ENCODE measurements at regions of chr12 and their contacts with region 1.

Region 1: DNA sequence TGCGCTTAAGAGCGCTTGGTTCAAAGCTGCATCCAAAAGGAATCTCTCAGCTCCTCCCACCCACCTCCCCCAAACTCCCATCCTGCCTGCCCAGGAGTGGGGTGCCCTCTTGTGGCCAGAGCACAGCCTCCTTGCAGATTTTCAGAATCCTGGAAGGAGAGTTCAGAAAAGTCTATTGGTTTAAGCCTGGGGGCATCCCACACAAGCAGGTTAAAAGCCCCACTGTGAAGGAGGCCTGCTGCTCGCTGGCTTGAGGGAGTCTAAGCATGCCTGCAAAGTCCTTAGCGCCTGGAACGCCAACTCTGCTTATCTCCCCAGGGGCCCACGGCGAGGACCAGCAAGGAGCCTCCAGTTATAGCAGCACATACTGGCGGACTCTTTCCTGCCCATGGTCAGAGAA is 297.1 kb downstream of the KSR2 start:
- DNase-seq: peak; percentile 75 to 87
- H3K4me3 ChIP-seq: no peak overlapping the region
- H3K27ac ChIP-seq: no peak overlapping the region
- H3K4me1 ChIP-seq: peaks cover 0 to 4% (median 2%) of the 10 kb centered on the region in 4 experiments; a peak in 3 of 7 replicates
- H3K27me3 ChIP-seq: no peaks in the 10 kb centered on the region
- CTCF ChIP-seq: peak; percentile 84 to 93 (median 86)
- EP300 ChIP-seq: no peak
- POLR2A ChIP-seq: no peak
- RAD21 ChIP-seq: peak; percentile 88 to 95

Region 2: DNA sequence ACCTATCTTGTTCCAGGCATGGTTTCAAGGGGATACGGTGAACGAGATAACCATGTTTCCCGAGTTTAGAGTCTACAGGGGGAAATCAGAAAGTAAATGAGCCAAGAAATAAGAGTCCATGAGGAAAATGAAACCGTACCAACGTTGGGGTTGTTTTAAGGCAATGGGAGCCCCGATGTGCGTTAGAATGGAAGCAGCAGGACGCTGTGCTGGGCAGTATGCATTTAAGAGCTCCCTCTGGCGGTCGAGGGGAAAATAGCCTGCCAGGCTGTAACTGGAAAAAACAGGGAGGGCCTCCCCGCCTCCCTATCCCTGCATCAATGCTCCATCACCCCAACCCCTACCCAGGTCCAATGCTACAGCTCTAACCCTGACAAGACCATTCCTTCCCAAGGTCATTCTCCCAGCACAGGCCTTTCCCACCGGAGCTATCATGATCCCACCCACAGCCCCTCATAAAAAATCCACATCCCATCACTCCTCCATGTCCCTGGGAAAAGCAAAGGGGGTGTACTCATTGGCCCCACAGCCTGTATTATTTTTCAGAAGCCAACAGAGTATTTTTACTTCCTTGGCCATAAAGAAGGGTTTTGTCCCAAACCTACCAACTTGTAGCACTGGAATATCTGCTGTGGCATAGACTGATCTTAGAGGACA is 84.0 kb before region 1 on chr12:
- CTCF ChIA-PET with region 1: interaction called, 14 read pairs
- POLR2A ChIA-PET with region 1: no interaction called
- DNase-seq: peak; percentile 36 to 89
- H3K4me3 ChIP-seq: no peak overlapping the region
- H3K27ac ChIP-seq: no peak overlapping the region
- H3K4me1 ChIP-seq: peaks cover 6 to 10% (median 7%) of the 10 kb centered on the region in 4 experiments
- H3K27me3 ChIP-seq: no peaks in the 10 kb centered on the region
- CTCF ChIP-seq: peak; percentile 84 to 96 (median 92)
- EP300 ChIP-seq: no peak
- POLR2A ChIP-seq: no peak
- RAD21 ChIP-seq: peak; percentile 81 to 83

Region 3: GRCh38 chr12:117640511-117640910 is 31.2 kb before region 1 on chr12:
- CTCF ChIA-PET with region 1: interaction called, 16 read pairs
- POLR2A ChIA-PET with region 1: no interaction called
- DNase-seq: no peak
- H3K4me3 ChIP-seq: no peak overlapping the region
- H3K27ac ChIP-seq: no peak overlapping the region
- H3K4me1 ChIP-seq: no peaks in the 10 kb centered on the region
- H3K27me3 ChIP-seq: no peaks in the 10 kb centered on the region
- CTCF ChIP-seq: no peak
- EP300 ChIP-seq: no peak
- POLR2A ChIP-seq: no peak
- RAD21 ChIP-seq: no peak